ENCODE measurements at regions of chr4 and their contacts with region 1.

Region 1: GRCh38 chr4:184474263-184475095 is at the start of gene IRF2:
- DNase-seq: peak; percentile 81 to 93
- H3K4me3 ChIP-seq: peak within 1 kb of the TSS; percentile 97
- H3K27ac ChIP-seq: peak within 1 kb of the TSS; percentile 83
- H3K4me1 ChIP-seq: peaks cover 21% of the 10 kb centered on the region
- H3K27me3 ChIP-seq: no peaks in the 10 kb centered on the region
- CTCF ChIP-seq: no peak
- total RNA-seq, gene IRF2: 27.4 and 34.4 TPM in 2 replicates

Region 2: GRCh38 chr4:184384056-184384809 is 90.2 kb before region 1 on chr4:
- CTCF ChIA-PET with region 1: no interaction called
- POLR2A ChIA-PET with region 1: no interaction called
- intact Hi-C with region 1: loop called (anchors 1 kb)
- DNase-seq: peak; percentile 44 to 74
- H3K4me3 ChIP-seq: peak overlapping the region; percentile 59; the same call in 1 of the 2 replicates
- H3K27ac ChIP-seq: peak overlapping the region; percentile 96
- H3K4me1 ChIP-seq: peaks cover 41% of the 10 kb centered on the region
- H3K27me3 ChIP-seq: no peaks in the 10 kb centered on the region
- CTCF ChIP-seq: no peak

Region 3: DNA sequence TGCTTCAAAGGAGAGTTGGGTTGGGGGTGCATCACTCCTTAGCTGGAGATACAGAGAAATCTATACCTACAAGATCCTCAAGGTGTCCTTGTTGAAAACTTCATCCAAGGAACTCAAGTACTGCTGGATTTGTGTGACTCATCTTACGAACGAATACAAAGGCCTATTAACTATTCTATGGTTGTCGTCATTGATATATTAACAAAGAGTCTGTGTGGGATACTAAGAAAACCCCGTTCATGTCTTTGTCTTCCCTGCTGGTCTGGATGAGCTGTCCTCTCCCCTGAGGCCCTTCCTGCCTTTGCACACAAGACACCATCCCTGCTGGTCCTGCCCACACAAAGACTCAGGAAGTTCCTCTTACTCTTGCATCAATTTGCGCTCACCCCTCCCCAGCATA is 54.8 kb after region 1 on chr4:
- CTCF ChIA-PET with region 1: no interaction called
- POLR2A ChIA-PET with region 1: no interaction called
- intact Hi-C with region 1: loop called (anchors 5 kb)
- DNase-seq: peak in 1 of 2 experiments; percentile 55
- H3K4me3 ChIP-seq: no peak overlapping the region
- H3K27ac ChIP-seq: no peak overlapping the region
- H3K4me1 ChIP-seq: no peaks in the 10 kb centered on the region
- H3K27me3 ChIP-seq: no peaks in the 10 kb centered on the region
- CTCF ChIP-seq: no peak

Region 4: DNA sequence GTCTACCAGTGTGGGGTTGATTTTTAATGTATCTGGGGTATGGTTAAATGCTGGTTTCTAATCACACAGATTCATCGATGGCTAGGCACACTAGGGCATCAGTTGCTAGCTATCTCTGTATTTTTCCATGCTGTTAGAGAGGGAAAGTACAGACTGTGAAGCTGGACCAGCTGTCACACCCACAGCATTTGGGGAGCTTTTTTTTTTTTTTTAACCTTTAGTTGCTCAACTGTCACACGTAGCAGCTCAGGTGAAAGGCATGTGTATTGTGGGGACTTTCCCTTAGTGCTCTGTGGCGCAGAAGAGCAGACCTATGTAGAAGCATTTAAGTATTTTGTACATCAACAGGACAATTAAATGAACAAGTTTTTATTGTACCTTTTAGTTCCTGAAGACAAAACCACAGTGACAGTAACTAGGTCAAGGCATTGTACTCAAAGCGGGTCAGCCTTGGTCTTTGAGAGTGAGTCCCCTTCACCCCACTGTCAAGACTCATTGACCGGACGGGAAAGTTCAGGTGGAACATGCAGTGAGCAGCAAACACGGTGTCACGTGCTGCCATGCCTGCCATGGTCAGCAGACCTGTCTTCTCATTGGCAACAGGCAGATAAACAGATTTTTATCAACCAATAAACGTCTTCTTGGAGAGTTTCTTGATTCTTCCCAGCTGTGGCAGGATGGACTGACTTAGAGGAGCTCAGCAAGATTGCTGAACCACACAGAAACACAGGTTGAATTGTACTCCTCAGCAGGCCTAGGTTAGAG is 109.4 kb after region 1 on chr4:
- CTCF ChIA-PET with region 1: no interaction called
- POLR2A ChIA-PET with region 1: no interaction called
- intact Hi-C with region 1: no loop called
- DNase-seq: no peak
- H3K4me3 ChIP-seq: no peak overlapping the region
- H3K27ac ChIP-seq: no peak overlapping the region
- H3K4me1 ChIP-seq: no peaks in the 10 kb centered on the region
- H3K27me3 ChIP-seq: no peaks in the 10 kb centered on the region
- CTCF ChIP-seq: no peak

Region 5: GRCh38 chr4:184733654-184734524 is 259.4 kb after region 1 on chr4 and contains the start of gene CENPU:
- CTCF ChIA-PET with region 1: no interaction called
- POLR2A ChIA-PET with region 1: no interaction called
- intact Hi-C with region 1: loop called (anchors 5 kb)
- DNase-seq: peak; percentile 90 to 98
- H3K4me3 ChIP-seq: peak within 1 kb of the TSS; percentile 95
- H3K27ac ChIP-seq: peak within 1 kb of the TSS; percentile 73
- H3K4me1 ChIP-seq: peaks cover 19% of the 10 kb centered on the region
- H3K27me3 ChIP-seq: no peaks in the 10 kb centered on the region
- CTCF ChIP-seq: no peak
- total RNA-seq, gene CENPU: 25.5 and 47.7 TPM in 2 replicates